Calu3 (cell line): ENCODE measurements at regions of chr17 and their contacts with region 1.

Region 1: DNA sequence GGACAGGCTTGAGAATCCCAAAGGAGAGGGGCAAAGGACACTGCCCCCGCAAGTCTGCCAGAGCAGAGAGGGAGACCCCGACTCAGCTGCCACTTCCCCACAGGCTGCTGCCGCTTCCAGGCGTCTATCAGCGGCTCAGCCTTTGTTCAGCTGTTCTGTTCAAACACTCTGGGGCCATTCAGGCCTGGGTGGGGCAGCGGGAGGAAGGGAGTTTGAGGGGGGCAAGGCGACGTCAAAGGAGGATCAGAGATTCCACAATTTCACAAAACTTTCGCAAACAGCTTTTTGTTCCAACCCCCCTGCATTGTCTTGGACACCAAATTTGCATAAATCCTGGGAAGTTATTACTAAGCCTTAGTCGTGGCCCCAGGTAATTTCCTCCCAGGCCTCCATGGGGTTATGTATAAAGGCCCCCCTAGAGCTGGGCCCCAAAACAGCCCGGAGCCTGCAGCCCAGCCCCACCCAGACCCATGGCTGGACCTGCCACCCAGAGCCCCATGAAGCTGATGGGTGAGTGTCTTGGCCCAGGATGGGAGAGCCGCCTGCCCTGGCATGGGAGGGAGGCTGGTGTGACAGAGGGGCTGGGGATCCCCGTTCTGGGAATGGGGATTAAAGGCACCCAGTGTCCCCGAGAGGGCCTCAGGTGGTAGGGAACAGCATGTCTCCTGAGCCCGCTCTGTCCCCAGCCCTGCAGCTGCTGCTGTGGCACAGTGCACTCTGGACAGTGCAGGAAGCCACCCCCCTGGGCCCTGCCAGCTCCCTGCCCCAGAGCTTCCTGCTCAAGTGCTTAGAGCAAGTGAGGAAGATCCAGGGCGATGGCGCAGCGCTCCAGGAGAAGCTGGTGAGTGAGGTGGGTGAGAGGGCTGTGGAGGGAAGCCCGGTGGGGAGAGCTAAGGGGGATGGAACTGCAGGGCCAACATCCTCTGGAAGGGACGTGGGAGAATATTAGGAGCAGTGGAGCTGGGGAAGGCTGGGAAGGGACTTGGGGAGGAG is at the start of gene CSF3:
- DNase-seq: peak; percentile 66
- H3K4me3 Mint-ChIP-seq: no peak within 1 kb of the TSS
- H3K27ac Mint-ChIP-seq: no peak within 1 kb of the TSS
- H3K4me1 Mint-ChIP-seq: peaks cover 10% of the 10 kb centered on the region
- H3K27me3 Mint-ChIP-seq: peaks cover 74% of the 10 kb centered on the region
- CTCF ChIP-seq: no peak
- total RNA-seq, gene CSF3: 0.38 TPM in 1 of 2 replicates, not detected in the other

Region 2: GRCh38 chr17:39813631-39814030 is 201.7 kb before region 1 on chr17:
- CTCF ChIA-PET with region 1: no interaction called
- intact Hi-C with region 1: no loop called
- DNase-seq: peak; percentile 64
- H3K4me3 Mint-ChIP-seq: no peak overlapping the region
- H3K27ac Mint-ChIP-seq: no peak overlapping the region
- H3K4me1 Mint-ChIP-seq: peaks cover 19% of the 10 kb centered on the region
- H3K27me3 Mint-ChIP-seq: no peaks in the 10 kb centered on the region
- CTCF ChIP-seq: no peak

Region 3: GRCh38 chr17:40026816-40027613 is 11.7 kb after region 1 on chr17:
- CTCF ChIA-PET with region 1: interaction called, 774 read pairs
- intact Hi-C with region 1: loop called (anchors 1 kb)
- DNase-seq: peak; percentile 100
- H3K4me3 Mint-ChIP-seq: no peak overlapping the region
- H3K27ac Mint-ChIP-seq: no peak overlapping the region
- H3K4me1 Mint-ChIP-seq: peaks cover 30% of the 10 kb centered on the region
- H3K27me3 Mint-ChIP-seq: no peaks in the 10 kb centered on the region
- CTCF ChIP-seq: no peak

Region 4: DNA sequence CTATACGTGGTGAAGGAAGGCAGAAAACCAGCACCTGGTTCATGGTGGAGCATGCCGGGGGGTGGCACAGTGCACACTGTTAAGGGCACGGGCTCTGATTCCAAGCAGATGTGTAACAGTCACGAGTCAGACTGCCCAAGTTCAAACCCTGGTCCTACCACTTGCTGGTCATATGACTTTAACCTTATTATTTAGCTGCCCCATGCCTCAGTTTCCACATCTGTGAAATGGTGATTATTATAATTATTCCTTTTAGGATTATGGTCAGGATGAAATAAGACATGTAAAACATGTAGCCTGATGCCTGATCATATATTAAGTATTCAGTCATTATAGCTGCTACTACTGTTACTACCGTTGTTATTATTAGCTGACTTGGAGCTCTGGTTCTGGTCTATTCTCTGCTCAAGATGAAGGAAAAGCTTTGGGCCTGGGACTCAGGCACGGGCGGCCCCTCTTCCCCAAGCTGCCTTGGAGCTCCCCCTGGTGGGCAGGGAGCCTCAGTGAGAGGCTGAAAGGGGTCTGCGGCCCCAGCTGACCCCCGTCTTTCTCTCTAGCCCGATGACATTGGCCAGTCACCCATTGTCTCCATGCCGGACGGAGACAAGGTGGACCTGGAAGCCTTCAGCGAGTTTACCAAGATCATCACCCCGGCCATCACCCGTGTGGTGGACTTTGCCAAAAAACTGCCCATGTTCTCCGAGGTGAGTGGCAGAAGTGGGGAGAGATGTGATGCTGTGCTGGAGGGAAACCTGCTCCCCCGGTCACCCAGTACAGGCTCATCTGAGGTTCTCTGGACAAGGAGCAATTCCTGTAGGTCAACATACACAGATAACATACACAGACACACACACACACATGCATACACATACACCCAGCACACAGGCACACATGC is 71.1 kb after region 1 on chr17:
- CTCF ChIA-PET with region 1: interaction called, 76 read pairs
- intact Hi-C with region 1: loop called (anchors 2 kb)
- DNase-seq: peak; percentile 100
- H3K4me3 Mint-ChIP-seq: no peak overlapping the region
- H3K27ac Mint-ChIP-seq: no peak overlapping the region
- H3K4me1 Mint-ChIP-seq: no peaks in the 10 kb centered on the region
- H3K27me3 Mint-ChIP-seq: no peaks in the 10 kb centered on the region
- CTCF ChIP-seq: no peak

Region 5: DNA sequence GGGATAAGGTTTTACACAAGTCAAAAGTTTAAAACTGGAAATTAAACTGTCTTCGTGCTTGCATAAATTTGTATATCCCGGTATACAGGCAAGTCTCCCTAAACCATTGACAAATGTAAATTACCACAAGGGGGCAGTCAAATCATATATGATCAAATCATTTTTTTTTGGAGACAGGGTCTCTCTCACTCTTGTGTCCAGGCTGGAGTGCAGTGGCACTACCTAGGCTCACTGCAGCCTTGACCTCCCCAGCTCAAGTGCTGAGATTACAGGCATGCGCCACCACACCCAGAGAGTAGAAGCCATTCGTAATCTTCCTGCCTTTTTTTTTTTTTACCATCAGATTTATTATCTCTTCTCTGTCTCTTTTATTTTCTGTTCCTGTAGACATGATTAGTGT is 383.9 kb after region 1 on chr17:
- CTCF ChIA-PET with region 1: no interaction called
- intact Hi-C with region 1: no loop called
- DNase-seq: no peak
- H3K4me3 Mint-ChIP-seq: no peak overlapping the region
- H3K27ac Mint-ChIP-seq: no peak overlapping the region
- H3K4me1 Mint-ChIP-seq: no peaks in the 10 kb centered on the region
- H3K27me3 Mint-ChIP-seq: no peaks in the 10 kb centered on the region
- CTCF ChIP-seq: no peak

Region 6: GRCh38 chr17:40474419-40475002 is 459.2 kb after region 1 on chr17:
- CTCF ChIA-PET with region 1: interaction called, 15 read pairs
- intact Hi-C with region 1: no loop called
- DNase-seq: no peak
- H3K4me3 Mint-ChIP-seq: no peak overlapping the region
- H3K27ac Mint-ChIP-seq: no peak overlapping the region
- H3K4me1 Mint-ChIP-seq: no peaks in the 10 kb centered on the region
- H3K27me3 Mint-ChIP-seq: peaks cover 65% of the 10 kb centered on the region
- CTCF ChIP-seq: no peak